ENCODE measurements at regions of chr7 and their contacts with region 1.

Region 1: DNA sequence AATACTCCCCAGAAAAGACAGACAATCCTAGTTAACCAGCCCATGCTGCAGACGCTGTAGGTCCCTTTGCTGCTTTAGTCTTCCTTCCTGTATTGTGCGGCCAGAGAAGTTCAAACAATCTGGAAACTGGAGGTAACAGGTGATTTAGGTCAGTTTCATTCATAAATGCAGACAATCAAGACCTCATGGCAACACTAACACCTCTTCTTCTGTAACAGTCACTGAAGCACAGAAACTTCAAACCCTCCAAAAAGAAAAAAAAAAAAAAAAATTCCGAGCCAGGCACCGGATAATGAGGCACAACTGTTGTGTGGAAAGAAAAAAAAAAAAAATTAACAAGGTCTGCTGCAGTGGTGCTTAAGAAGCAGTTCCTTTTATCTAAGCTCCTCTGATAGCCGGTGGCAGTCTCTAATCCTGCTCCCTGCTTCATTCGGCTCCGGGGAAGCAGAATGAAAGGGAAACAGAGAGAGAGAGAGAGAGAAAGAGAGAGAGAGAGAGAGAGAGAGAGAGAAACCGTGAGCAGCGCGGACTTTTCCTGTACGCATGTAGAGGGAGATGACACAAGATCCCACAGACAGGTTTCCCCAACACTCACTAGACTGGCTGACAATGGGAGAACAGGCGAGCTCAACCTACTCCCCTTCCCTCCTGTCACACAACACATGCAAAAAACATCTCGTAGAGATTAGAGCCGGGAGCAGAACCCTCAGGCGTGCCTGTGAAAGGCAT is at the start of gene SEMA3A:
- DNase-seq: peak; percentile 35
- H3K4me3 Mint-ChIP-seq: peak within 1 kb of the TSS; percentile 85
- H3K27ac Mint-ChIP-seq: peak within 1 kb of the TSS; percentile 87
- H3K4me1 Mint-ChIP-seq: peaks cover 20% of the 10 kb centered on the region
- H3K27me3 Mint-ChIP-seq: no peaks in the 10 kb centered on the region
- CTCF ChIP-seq: no peak
- total RNA-seq, gene SEMA3A: 20.2 and 24.3 TPM in 2 replicates

Region 2: GRCh38 chr7:83957333-83957732 is 237.4 kb before region 1 on chr7:
- CTCF ChIA-PET with region 1: no interaction called
- intact Hi-C with region 1: no loop called
- DNase-seq: no peak
- H3K4me3 Mint-ChIP-seq: no peak overlapping the region
- H3K27ac Mint-ChIP-seq: no peak overlapping the region
- H3K4me1 Mint-ChIP-seq: no peaks in the 10 kb centered on the region
- H3K27me3 Mint-ChIP-seq: no peaks in the 10 kb centered on the region
- CTCF ChIP-seq: no peak

Region 3: GRCh38 chr7:84412161-84412969 is 217.7 kb after region 1 on chr7:
- CTCF ChIA-PET with region 1: no interaction called
- intact Hi-C with region 1: loop called (anchors 5 kb)
- DNase-seq: peak; percentile 9
- H3K4me3 Mint-ChIP-seq: peak overlapping the region; percentile 14
- H3K27ac Mint-ChIP-seq: peak overlapping the region; percentile 39
- H3K4me1 Mint-ChIP-seq: peaks cover 15% of the 10 kb centered on the region
- H3K27me3 Mint-ChIP-seq: no peaks in the 10 kb centered on the region
- CTCF ChIP-seq: no peak

Region 4: GRCh38 chr7:84455788-84456187 is 261.1 kb after region 1 on chr7:
- CTCF ChIA-PET with region 1: no interaction called
- intact Hi-C with region 1: loop called (anchors 10 kb)
- DNase-seq: no peak
- H3K4me3 Mint-ChIP-seq: no peak overlapping the region
- H3K27ac Mint-ChIP-seq: no peak overlapping the region
- H3K4me1 Mint-ChIP-seq: no peaks in the 10 kb centered on the region
- H3K27me3 Mint-ChIP-seq: no peaks in the 10 kb centered on the region
- CTCF ChIP-seq: no peak

Measured in Calu3 (cell line).